ENCODE measurements at regions of chr4 and their contacts with region 1.

Region 1: GRCh38 chr4:107989537-107990386 is at the start of gene HADH:
- DNase-seq: peak; percentile 99
- H3K4me3 Mint-ChIP-seq: peak within 1 kb of the TSS; percentile 92
- H3K27ac Mint-ChIP-seq: peak within 1 kb of the TSS; percentile 95
- H3K4me1 Mint-ChIP-seq: peaks cover 32% of the 10 kb centered on the region
- H3K27me3 Mint-ChIP-seq: no peaks in the 10 kb centered on the region
- total RNA-seq, gene HADH: 37.2 and 41.4 TPM in 2 replicates

Region 2: DNA sequence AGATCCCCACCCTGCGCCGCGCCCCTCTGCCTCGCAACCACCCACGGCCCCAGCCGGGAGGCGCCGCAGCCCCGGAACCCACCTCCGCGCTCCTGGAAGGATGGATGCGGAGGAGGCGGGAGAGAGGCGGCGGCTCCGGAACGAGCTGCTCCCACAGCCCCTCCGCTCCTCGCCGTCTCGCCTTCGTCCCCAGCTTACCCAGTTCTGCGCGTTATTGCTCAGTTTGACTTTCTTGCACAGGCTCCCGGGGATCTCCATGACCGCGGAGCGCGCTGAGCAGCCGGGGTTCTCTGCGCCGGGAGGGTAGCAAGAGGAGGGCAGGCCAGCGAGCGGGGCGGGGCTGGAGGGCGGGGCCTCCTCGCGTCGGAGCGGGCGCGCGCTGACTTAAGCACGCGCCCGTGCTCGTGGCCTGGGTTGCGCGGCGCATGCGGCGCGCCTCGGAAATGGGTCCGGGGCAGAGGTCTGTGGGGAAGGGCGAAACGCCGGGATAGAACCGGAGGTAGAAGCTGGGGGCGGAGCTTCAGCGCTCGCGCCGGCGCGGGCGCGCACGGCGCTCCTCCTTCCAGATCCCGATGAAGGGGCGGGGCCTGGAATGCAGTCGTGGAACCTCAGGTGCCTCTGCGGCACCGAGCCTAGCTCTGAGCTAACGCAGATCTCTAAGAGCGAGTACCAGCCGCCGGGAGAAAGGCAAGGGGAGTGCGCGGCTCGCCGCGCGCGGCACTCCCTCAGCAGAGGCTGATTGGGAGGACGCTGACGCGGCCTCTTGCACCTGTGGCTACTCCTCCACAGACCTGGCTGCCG is 269.6 kb before region 1 on chr4 and contains the start of gene PAPSS1:
- intact Hi-C with region 1: loop called (anchors 1 kb)
- DNase-seq: peak; percentile 98
- H3K4me3 Mint-ChIP-seq: peak within 1 kb of the TSS; percentile 91
- H3K27ac Mint-ChIP-seq: peak within 1 kb of the TSS; percentile 91
- H3K4me1 Mint-ChIP-seq: peaks cover 31% of the 10 kb centered on the region
- H3K27me3 Mint-ChIP-seq: no peaks in the 10 kb centered on the region
- total RNA-seq, gene PAPSS1: 31.1 and 31.2 TPM in 2 replicates

Region 3: GRCh38 chr4:107930821-107931774 is 58.7 kb before region 1 on chr4 and contains the start of gene CYP2U1:
- intact Hi-C with region 1: loop called (anchors 1 kb)
- DNase-seq: peak; percentile 95
- H3K4me3 Mint-ChIP-seq: peak within 1 kb of the TSS; percentile 82
- H3K27ac Mint-ChIP-seq: peak within 1 kb of the TSS; percentile 64
- H3K4me1 Mint-ChIP-seq: peaks cover 14% of the 10 kb centered on the region
- H3K27me3 Mint-ChIP-seq: peaks cover 18% of the 10 kb centered on the region
- total RNA-seq, gene CYP2U1: 0.90 and 0.96 TPM in 2 replicates

Region 4: DNA sequence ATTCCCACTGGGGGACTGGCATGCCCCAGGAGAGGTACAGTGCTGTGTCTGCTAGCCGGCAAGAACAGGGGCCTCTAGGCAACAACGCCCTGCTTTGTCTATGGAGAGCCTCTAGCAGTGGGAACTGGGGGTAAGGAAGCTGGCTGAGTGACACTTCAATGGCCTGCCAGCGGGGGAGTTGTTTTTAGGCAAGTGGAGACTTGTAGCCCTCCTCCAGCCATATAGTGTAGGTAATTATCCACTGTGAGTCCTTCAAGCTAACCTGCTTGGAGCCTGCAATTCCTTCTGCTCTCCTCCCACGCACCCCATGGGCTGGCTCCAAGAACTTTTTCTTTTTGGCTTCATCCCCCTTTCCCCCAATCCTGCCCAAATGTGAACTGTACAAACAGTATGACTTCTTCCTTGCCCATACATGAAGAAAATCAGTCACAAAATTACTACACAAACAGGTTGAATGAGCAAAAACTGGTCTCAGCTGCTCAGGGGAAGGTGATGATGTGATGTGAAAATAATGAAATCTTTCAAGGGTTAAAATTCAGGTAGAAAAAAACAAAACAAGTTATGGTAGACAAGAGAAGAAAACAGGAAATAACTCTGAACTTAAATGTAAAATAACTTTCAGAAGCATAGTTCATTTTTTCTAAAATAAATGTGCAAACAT is 145.9 kb after region 1 on chr4:
- intact Hi-C with region 1: no loop called
- DNase-seq: peak; percentile 73
- H3K4me3 Mint-ChIP-seq: peak overlapping the region; percentile 60
- H3K27ac Mint-ChIP-seq: peak overlapping the region; percentile 85
- H3K4me1 Mint-ChIP-seq: peaks cover 70% of the 10 kb centered on the region
- H3K27me3 Mint-ChIP-seq: no peaks in the 10 kb centered on the region

Region 5: DNA sequence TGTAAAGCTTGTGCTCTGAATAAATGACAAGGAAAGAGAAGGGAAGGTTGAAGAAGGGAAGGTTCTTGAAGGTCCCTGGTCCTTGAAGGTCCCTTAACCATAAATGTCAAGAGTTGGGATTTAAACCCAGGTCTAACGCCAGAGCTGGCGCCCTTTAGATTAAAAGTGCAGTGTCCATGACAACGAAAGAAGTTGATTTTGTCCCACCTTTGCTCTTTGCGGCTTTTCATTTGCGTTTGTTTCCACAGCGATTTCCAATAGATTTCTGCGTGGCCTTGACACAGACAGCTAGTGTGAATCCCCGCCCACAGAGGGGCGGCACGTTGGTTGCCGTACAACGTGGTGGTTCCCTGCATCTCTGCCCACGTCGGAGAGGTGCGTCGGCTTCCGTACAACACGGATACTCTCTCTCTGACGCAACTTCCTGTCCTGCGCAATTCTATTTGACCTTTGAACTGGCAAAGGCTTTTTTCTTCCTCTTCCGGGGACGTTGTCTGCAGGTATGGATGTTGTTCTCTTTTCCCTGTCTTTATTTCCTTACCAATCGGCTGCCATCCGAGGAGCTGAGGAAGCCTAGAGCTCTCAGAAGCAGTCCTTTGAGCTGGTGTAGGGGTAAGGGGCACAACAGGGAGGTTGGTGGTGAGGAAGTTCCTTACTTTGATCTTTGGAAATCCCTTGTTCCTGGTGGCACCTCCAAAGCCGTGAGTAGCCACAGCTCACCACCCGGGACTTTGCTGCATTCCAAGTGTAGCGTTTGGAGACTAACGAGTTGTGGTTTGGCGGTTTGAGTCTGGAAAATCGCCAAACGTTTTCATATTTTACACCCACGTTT is 630.6 kb after region 1 on chr4 and contains the start of gene RPL34:
- intact Hi-C with region 1: loop called (anchors 1 kb)
- DNase-seq: peak; percentile 99
- H3K4me3 Mint-ChIP-seq: peak within 1 kb of the TSS; percentile 93
- H3K27ac Mint-ChIP-seq: peak within 1 kb of the TSS; percentile 96
- H3K4me1 Mint-ChIP-seq: peaks cover 40% of the 10 kb centered on the region
- H3K27me3 Mint-ChIP-seq: no peaks in the 10 kb centered on the region
- total RNA-seq, gene RPL34: 1,411 and 1,425 TPM in 2 replicates

Region 6: GRCh38 chr4:108650212-108651013 is 660.7 kb after region 1 on chr4 and contains the start of gene OSTC:
- intact Hi-C with region 1: loop called (anchors 1 kb)
- DNase-seq: peak; percentile 98
- H3K4me3 Mint-ChIP-seq: peak within 1 kb of the TSS; percentile 95
- H3K27ac Mint-ChIP-seq: peak within 1 kb of the TSS; percentile 86
- H3K4me1 Mint-ChIP-seq: peaks cover 21% of the 10 kb centered on the region
- H3K27me3 Mint-ChIP-seq: no peaks in the 10 kb centered on the region
- total RNA-seq, gene OSTC: 91.2 and 93.3 TPM in 2 replicates

Region 7: GRCh38 chr4:109729718-109730618 is 1740.2 kb after region 1 on chr4 and contains the start of gene PLA2G12A:
- intact Hi-C with region 1: loop called (anchors 5 kb)
- DNase-seq: peak; percentile 92
- H3K4me3 Mint-ChIP-seq: peak within 1 kb of the TSS; percentile 91
- H3K27ac Mint-ChIP-seq: peak within 1 kb of the TSS; percentile 78
- H3K4me1 Mint-ChIP-seq: peaks cover 16% of the 10 kb centered on the region
- H3K27me3 Mint-ChIP-seq: peaks cover 6% of the 10 kb centered on the region
- total RNA-seq, gene PLA2G12A: 9.0 and 11.4 TPM in 2 replicates